Heart left ventricle (tissue), 16 donors: ENCODE measurements at regions of chr15 and their contacts with region 1.

Region 1: DNA sequence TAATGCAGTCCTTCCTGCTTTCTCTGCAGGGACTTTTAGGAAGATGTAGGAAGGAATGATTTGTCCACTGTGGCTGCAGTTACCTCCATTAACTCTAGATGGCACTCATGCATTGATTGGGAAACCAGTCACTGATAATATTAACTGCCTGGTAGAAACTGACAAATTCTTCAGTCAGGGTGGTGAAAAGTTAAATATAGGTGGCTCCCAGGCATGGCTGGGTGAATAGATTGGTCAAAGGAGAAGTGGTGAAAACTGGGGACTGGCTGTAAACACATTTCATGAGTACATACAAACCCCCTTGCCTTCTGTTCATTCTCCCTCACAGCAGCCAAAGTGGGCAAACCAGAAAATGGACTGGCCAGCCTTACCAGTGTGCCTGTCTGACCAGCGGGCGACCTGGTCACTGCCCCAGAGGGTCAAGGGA is 333.4 kb downstream of the THSD4 start:
- DNase-seq: peak in 2 of 5 donors; percentile 37 to 52
- ATAC-seq: peak; percentile 56 to 78 (median 64)
- H3K4me3 ChIP-seq: no peak overlapping the region
- H3K27ac ChIP-seq: peak overlapping the region in 11 of 12 donors; percentile 22 to 84 (median 57)
- H3K4me1 ChIP-seq: peaks cover 0 to 53% (median 12%) of the 10 kb centered on the region in 12 donors
- H3K27me3 ChIP-seq: no peaks in the 10 kb centered on the region
- CTCF ChIP-seq: peak; percentile 75 to 97 (median 92)
- POLR2A ChIP-seq: no peak

Region 2: DNA sequence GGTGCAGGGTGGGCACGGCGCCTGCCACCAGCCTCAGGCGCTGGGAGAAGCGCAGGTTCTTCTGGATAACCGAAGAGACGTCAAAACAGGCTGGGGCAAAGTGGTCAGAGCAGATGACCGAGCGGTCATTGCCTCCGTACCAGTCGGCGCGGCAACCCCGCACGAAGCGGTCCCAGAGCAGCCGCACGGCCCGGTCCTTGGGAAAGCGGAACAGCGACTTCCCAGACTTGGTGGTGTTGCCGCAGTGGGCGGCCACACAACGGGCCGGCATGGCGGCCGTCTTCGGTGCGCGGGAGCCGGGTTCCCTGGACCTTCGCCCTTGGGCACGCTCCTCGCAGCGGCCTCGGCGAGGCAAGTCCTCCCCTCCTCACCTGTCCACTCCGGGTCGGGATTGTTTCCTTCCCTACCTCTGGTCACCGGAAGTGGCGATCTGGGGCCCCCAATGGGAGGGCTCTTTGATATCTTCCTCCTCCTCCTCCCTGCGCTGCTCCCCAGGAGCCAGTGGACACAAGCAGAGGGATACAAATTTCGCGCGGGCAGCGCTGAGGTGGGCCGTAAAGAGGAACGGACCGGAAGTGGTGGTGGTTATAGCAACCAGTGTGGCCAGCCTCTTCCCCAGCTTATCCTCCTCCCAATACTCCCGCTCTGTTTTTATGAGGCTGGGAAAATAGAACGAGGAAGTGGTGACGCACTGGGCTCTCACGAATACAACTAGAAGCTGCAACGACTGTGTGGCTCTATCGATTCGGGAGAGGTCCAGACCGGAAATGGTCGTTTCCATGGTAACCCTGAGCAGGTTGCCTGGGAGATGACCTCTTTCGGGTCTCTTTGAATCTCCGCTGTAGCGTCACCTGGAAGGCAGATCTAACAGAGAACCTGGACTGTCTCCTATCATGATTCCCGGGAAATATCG is 556.4 kb before region 1 on chr15 and contains the starts of genes LRRC49 and THAP10:
- intact Hi-C with region 1: loop called in 7 of 10 experiments (anchors 5 to 10 kb)
- DNase-seq: peak; percentile 88 to 93 (median 90)
- ATAC-seq: peak; percentile 96 to 99 (median 98)
- H3K4me3 ChIP-seq: peak within 1 kb of the TSS; percentile 33 to 83 (median 74)
- H3K27ac ChIP-seq: peak within 1 kb of the TSS; percentile 19 to 83 (median 68)
- H3K4me1 ChIP-seq: peaks cover 0 to 23% (median 6%) of the 10 kb centered on the region in 12 donors
- H3K27me3 ChIP-seq: peaks cover 0 to 3% (median 0%) of the 10 kb centered on the region in 9 donors
- CTCF ChIP-seq: no peak
- POLR2A ChIP-seq: no peak
- total RNA-seq, gene LRRC49: 22.4 to 123 (median 60.3) TPM
- total RNA-seq, gene THAP10: 2.8 to 5.9 (median 5.1) TPM

Region 3: GRCh38 chr15:71325481-71325880 is 123.2 kb before region 1 on chr15:
- intact Hi-C with region 1: no loop called
- DNase-seq: no peak
- ATAC-seq: no peak
- H3K4me3 ChIP-seq: no peak overlapping the region
- H3K27ac ChIP-seq: no peak overlapping the region
- H3K4me1 ChIP-seq: peaks cover 0 to 33% (median 22%) of the 10 kb centered on the region in 12 donors
- H3K27me3 ChIP-seq: no peaks in the 10 kb centered on the region
- CTCF ChIP-seq: no peak
- POLR2A ChIP-seq: no peak

Region 4: GRCh38 chr15:71364117-71364584 is 84.5 kb before region 1 on chr15:
- intact Hi-C with region 1: no loop called
- DNase-seq: no peak
- ATAC-seq: peak in 1 of 4 donors; percentile 17
- H3K4me3 ChIP-seq: no peak overlapping the region
- H3K27ac ChIP-seq: no peak overlapping the region
- H3K4me1 ChIP-seq: peaks cover 0 to 8% (median 0%) of the 10 kb centered on the region in 12 donors
- H3K27me3 ChIP-seq: no peaks in the 10 kb centered on the region
- CTCF ChIP-seq: no peak
- POLR2A ChIP-seq: no peak

Region 5: GRCh38 chr15:71485099-71485693 is 36.5 kb after region 1 on chr15:
- intact Hi-C with region 1: no loop called
- DNase-seq: no peak
- ATAC-seq: no peak
- H3K4me3 ChIP-seq: no peak overlapping the region
- H3K27ac ChIP-seq: no peak overlapping the region
- H3K4me1 ChIP-seq: peaks cover 0 to 9% (median 0%) of the 10 kb centered on the region in 12 donors
- H3K27me3 ChIP-seq: no peaks in the 10 kb centered on the region
- CTCF ChIP-seq: peak in 6 of 12 donors; percentile 6 to 42 (median 25)
- POLR2A ChIP-seq: no peak

Region 6: GRCh38 chr15:71575474-71576045 is 126.9 kb after region 1 on chr15:
- intact Hi-C with region 1: loop called in 3 of 10 experiments (anchors 5 to 10 kb)
- DNase-seq: no peak
- ATAC-seq: no peak
- H3K4me3 ChIP-seq: no peak overlapping the region
- H3K27ac ChIP-seq: no peak overlapping the region
- H3K4me1 ChIP-seq: peaks cover 0 to 19% (median 0%) of the 10 kb centered on the region in 12 donors
- H3K27me3 ChIP-seq: no peaks in the 10 kb centered on the region
- CTCF ChIP-seq: peak; percentile 28 to 60 (median 47)
- POLR2A ChIP-seq: no peak

Region 7: GRCh38 chr15:71730277-71731144 is 281.8 kb after region 1 on chr15:
- intact Hi-C with region 1: loop called (anchors 1 to 5 kb)
- DNase-seq: peak in 3 of 5 donors; percentile 48 to 58 (median 51)
- ATAC-seq: peak; percentile 75 to 82 (median 80)
- H3K4me3 ChIP-seq: no peak overlapping the region
- H3K27ac ChIP-seq: peak overlapping the region in 6 of 12 donors; percentile 0 to 54 (median 19)
- H3K4me1 ChIP-seq: peaks cover 0 to 29% (median 8%) of the 10 kb centered on the region in 12 donors
- H3K27me3 ChIP-seq: no peaks in the 10 kb centered on the region
- CTCF ChIP-seq: peak; percentile 65 to 86 (median 79)
- POLR2A ChIP-seq: no peak

Region 8: DNA sequence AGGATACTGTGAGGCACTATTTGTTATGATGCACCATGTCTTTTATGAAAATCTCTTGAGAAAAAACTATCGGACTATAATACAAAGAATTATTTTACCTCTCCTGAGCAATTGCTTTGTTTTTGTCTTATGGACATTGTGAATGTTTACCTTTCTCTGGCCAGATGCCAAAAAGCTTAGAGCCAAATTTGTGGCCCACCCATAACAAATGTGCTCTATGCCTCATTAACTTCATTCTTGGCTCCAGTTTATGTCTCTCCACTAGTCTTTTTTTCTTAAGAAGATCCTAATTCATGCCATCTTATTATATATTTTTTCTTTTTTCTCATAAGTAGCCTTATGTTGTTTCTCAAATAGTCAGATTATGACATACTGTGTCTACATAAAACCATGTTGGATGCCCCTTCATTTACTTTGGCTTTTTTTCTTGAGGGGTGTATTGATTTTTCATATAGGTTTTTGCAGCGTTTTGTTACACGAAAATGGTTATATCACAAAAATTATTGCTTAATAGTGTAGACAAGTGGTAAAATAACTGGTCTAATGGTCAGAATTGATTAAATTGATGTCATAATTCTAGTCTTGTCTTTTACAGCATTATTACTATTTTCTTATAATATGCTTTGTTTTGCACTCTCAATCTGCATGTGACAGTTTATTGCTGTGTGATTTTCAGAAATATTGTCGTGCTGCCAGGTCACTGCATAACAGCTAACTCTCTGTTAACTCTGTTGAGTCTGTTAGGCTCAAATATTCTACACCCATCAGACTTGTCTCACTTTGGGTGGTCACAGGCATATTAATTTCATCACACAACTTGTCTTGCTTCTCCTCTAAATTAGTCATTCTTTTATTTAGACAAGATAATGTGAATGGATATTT is 687.7 kb after region 1 on chr15:
- intact Hi-C with region 1: loop called in 1 of 10 experiments (anchors 10 kb)
- DNase-seq: no peak
- ATAC-seq: no peak
- H3K4me3 ChIP-seq: no peak overlapping the region
- H3K27ac ChIP-seq: no peak overlapping the region
- H3K4me1 ChIP-seq: peaks cover 0 to 23% (median 2%) of the 10 kb centered on the region in 12 donors
- H3K27me3 ChIP-seq: no peaks in the 10 kb centered on the region
- CTCF ChIP-seq: no peak
- POLR2A ChIP-seq: no peak